ENCODE measurements at regions of chr13 and their contacts with region 1.

Region 1: GRCh38 chr13:44577236-44578066 is 1.3 kb upstream of the TSC22D1 start:
- DNase-seq: peak; percentile 95
- ATAC-seq: peak; percentile 85
- H3K4me3 ChIP-seq: peak overlapping the region; percentile 80
- H3K27ac ChIP-seq: peak overlapping the region; percentile 91
- H3K4me1 ChIP-seq: peaks cover 24% of the 10 kb centered on the region
- H3K27me3 ChIP-seq: no peaks in the 10 kb centered on the region
- CTCF ChIP-seq: no peak
- POLR2A ChIP-seq: peak; percentile 86
- RAD21 ChIP-seq: no peak; the same call in 1 of the 2 replicates

Region 2: GRCh38 chr13:44537248-44537647 is 40.2 kb before region 1 on chr13:
- CTCF ChIA-PET with region 1: no interaction called
- POLR2A ChIA-PET with region 1: no interaction called
- dilution Hi-C with region 1: no loop called
- in situ Hi-C with region 1: no loop called
- intact Hi-C with region 1: loop called (anchors 5 kb)
- DNase-seq: no peak
- ATAC-seq: no peak
- H3K4me3 ChIP-seq: no peak overlapping the region
- H3K27ac ChIP-seq: no peak overlapping the region
- H3K4me1 ChIP-seq: no peaks in the 10 kb centered on the region
- H3K27me3 ChIP-seq: no peaks in the 10 kb centered on the region
- CTCF ChIP-seq: no peak
- POLR2A ChIP-seq: no peak
- RAD21 ChIP-seq: no peak

Region 3: DNA sequence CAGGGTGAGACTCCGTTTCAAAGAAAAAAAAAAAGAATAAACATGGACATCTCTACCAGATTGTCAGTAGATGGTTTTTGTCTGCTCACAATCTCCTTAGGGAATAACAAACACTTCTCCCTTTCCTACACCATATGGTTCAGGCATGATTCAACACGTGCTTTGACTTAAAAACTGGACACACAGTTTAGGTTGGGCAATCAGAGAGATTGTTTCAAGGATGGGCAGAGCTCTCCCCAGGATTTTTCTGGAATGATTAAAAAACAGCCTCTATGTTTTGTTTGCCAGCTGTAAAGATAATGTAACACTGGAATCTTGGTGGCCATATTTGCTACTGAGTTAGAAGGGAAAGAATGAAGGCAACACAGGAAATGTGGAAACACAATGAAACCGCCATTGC is 148.8 kb after region 1 on chr13:
- CTCF ChIA-PET with region 1: no interaction called
- POLR2A ChIA-PET with region 1: no interaction called
- dilution Hi-C with region 1: no loop called
- in situ Hi-C with region 1: no loop called
- intact Hi-C with region 1: loop called (anchors 5 kb)
- DNase-seq: peak; percentile 90
- ATAC-seq: peak; percentile 96
- H3K4me3 ChIP-seq: no peak overlapping the region
- H3K27ac ChIP-seq: peak overlapping the region; percentile 96; the same call in 1 of the 2 replicates
- H3K4me1 ChIP-seq: peaks cover 6% of the 10 kb centered on the region
- H3K27me3 ChIP-seq: no peaks in the 10 kb centered on the region
- CTCF ChIP-seq: no peak
- POLR2A ChIP-seq: no peak
- RAD21 ChIP-seq: no peak

Region 4: GRCh38 chr13:44879463-44880058 is 302.1 kb after region 1 on chr13:
- CTCF ChIA-PET with region 1: interaction called, 3 read pairs
- POLR2A ChIA-PET with region 1: no interaction called
- dilution Hi-C with region 1: no loop called
- in situ Hi-C with region 1: no loop called
- intact Hi-C with region 1: loop called (anchors 2 kb)
- DNase-seq: peak; percentile 64
- ATAC-seq: peak; percentile 40; the same call in 1 of the 2 replicates
- H3K4me3 ChIP-seq: no peak overlapping the region
- H3K27ac ChIP-seq: no peak overlapping the region
- H3K4me1 ChIP-seq: peaks cover 5% of the 10 kb centered on the region
- H3K27me3 ChIP-seq: no peaks in the 10 kb centered on the region
- CTCF ChIP-seq: peak; percentile 53
- POLR2A ChIP-seq: no peak
- RAD21 ChIP-seq: peak; percentile 68

Region 5: GRCh38 chr13:44969551-44970484 is 392.4 kb after region 1 on chr13:
- CTCF ChIA-PET with region 1: no interaction called
- POLR2A ChIA-PET with region 1: no interaction called
- dilution Hi-C with region 1: no loop called
- in situ Hi-C with region 1: no loop called
- intact Hi-C with region 1: loop called (anchors 2 kb)
- DNase-seq: peak; percentile 71
- ATAC-seq: peak; percentile 55
- H3K4me3 ChIP-seq: no peak overlapping the region
- H3K27ac ChIP-seq: no peak overlapping the region
- H3K4me1 ChIP-seq: peaks cover 9% of the 10 kb centered on the region
- H3K27me3 ChIP-seq: no peaks in the 10 kb centered on the region
- CTCF ChIP-seq: peak; percentile 87
- POLR2A ChIP-seq: no peak
- RAD21 ChIP-seq: peak; percentile 89

Measured in IMR-90 (cell line).